Endothelial cell of umbilical vein (primary cell): ENCODE measurements at regions of chr1 and their contacts with region 1.

Region 1: GRCh38 chr1:78081980-78082860 is 36.5 kb downstream of the GIPC2 start:
- DNase-seq: peak; percentile 53
- H3K4me3 ChIP-seq: no peak overlapping the region
- H3K27ac ChIP-seq: no peak overlapping the region
- H3K4me1 ChIP-seq: peaks cover 39% of the 10 kb centered on the region
- H3K27me3 ChIP-seq: no peaks in the 10 kb centered on the region
- CTCF ChIP-seq: no peak
- POLR2A ChIP-seq: no peak

Region 2: GRCh38 chr1:78060857-78061563 is 21.2 kb before region 1 on chr1:
- CTCF ChIA-PET with region 1: no interaction called
- POLR2A ChIA-PET with region 1: no interaction called
- dilution Hi-C with region 1: no loop called
- intact Hi-C with region 1: no loop called
- DNase-seq: no peak
- H3K4me3 ChIP-seq: no peak overlapping the region
- H3K27ac ChIP-seq: no peak overlapping the region
- H3K4me1 ChIP-seq: peaks cover 4% of the 10 kb centered on the region
- H3K27me3 ChIP-seq: no peaks in the 10 kb centered on the region
- CTCF ChIP-seq: no peak
- POLR2A ChIP-seq: no peak

Region 3: GRCh38 chr1:78095593-78095992 is 13.4 kb after region 1 on chr1:
- CTCF ChIA-PET with region 1: interaction called, 24 read pairs
- POLR2A ChIA-PET with region 1: interaction called, 12 read pairs
- dilution Hi-C with region 1: no loop called
- intact Hi-C with region 1: loop called (anchors 1 kb)
- DNase-seq: peak; percentile 86
- H3K4me3 ChIP-seq: no peak overlapping the region
- H3K27ac ChIP-seq: peak overlapping the region; percentile 91
- H3K4me1 ChIP-seq: peaks cover 46% of the 10 kb centered on the region
- H3K27me3 ChIP-seq: no peaks in the 10 kb centered on the region
- CTCF ChIP-seq: no peak
- POLR2A ChIP-seq: no peak

Region 4: DNA sequence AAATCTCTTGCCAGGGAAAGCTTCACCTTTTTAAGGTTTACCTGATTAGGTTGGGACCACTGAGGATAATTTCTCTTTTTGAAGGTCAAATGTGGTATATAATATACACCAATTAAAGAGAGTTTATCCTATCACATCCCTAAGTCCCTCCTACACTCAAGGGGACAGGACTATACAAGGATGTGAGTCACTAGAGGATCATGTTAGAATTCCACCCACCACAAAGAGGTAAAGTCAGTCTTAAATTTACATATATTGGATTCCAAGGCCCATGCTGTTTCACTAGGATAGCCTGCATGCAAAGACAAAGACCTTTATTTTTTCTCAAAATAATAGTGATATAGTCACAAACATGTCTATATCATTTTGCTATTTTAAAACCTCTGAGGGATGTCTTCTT is 128.0 kb after region 1 on chr1:
- CTCF ChIA-PET with region 1: no interaction called
- POLR2A ChIA-PET with region 1: no interaction called
- dilution Hi-C with region 1: no loop called
- intact Hi-C with region 1: no loop called
- DNase-seq: no peak
- H3K4me3 ChIP-seq: no peak overlapping the region
- H3K27ac ChIP-seq: no peak overlapping the region
- H3K4me1 ChIP-seq: no peaks in the 10 kb centered on the region
- H3K27me3 ChIP-seq: no peaks in the 10 kb centered on the region
- CTCF ChIP-seq: no peak
- POLR2A ChIP-seq: no peak

Region 5: DNA sequence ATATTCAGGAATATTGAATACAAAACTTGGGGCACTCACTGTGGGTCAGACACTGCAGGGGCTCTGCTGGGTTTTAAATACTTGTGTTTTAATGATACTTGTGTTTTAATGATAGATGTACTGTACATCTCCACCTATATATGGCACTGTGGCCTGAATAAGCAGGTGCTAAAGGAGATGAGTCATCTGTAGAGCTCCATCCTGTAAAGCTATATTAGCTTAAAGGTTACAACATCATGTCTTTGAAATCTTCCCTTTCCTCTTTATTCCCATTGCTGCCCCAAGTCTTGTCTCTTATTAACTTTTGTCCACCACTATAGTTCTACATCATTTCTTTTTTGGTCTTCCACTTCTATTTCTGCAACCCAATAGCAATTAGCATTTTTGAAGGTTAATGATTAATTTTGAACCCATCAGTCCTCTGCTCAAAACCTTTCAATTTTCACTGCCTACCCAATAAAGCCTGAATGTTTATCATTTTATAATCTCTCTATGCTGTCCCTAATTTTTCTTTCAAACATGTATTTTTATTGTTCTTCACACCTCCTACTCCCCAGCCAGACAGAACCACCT is 295.2 kb after region 1 on chr1:
- CTCF ChIA-PET with region 1: no interaction called
- POLR2A ChIA-PET with region 1: no interaction called
- dilution Hi-C with region 1: no loop called
- intact Hi-C with region 1: no loop called
- DNase-seq: no peak
- H3K4me3 ChIP-seq: no peak overlapping the region
- H3K27ac ChIP-seq: no peak overlapping the region
- H3K4me1 ChIP-seq: no peaks in the 10 kb centered on the region
- H3K27me3 ChIP-seq: peaks cover 4% of the 10 kb centered on the region in 2 experiments
- CTCF ChIP-seq: no peak
- POLR2A ChIP-seq: no peak